BJ (cell line): ENCODE measurements at regions of chr15 and their contacts with region 1.

Region 1: DNA sequence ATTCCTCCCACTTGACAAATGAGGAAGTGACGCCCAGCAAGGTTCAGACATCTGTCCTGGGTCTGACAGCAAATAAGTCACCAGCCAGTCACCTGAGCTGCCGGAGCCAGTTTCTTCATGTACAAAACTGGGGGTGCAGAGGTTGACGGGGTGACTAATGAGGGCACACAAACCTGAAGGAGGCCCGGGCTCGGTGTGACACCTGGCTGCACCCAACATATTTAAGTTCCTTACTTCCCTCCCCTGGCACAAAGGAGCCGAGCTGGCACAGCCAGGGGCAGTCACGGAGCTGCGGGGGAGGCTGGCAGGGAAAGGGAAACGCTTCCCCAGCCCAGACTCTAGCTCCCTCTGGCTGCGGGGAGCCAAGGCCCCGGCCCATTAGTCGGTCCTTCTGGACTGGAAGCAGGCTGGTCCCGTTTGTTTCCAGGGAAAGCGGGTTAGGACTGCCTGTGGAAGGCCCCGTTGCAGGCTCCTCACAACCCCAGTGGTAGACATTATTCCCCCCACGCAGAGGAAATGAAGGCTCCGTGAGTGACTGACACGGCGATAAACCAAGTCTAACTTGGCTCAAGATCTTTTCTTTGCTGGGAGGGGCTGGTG is 2.3 kb downstream of the FBXL22 start:
- DNase-seq: no peak
- H3K4me3 ChIP-seq: no peak overlapping the region
- H3K27me3 ChIP-seq: no peaks in the 10 kb centered on the region
- CTCF ChIP-seq: peak; percentile 38

Region 2: GRCh38 chr15:63610200-63610841 is 10.8 kb after region 1 on chr15:
- CTCF ChIA-PET with region 1: interaction called, 11 read pairs
- POLR2A ChIA-PET with region 1: no interaction called
- DNase-seq: no peak
- H3K4me3 ChIP-seq: no peak overlapping the region
- H3K27me3 ChIP-seq: no peaks in the 10 kb centered on the region
- CTCF ChIP-seq: peak; percentile 83